GM10248 (cell line): ENCODE measurements at regions of chr20 and their contacts with region 1.

Region 1: GRCh38 chr20:44800398-44801046 is 9.8 kb downstream of the RIMS4 start:
- DNase-seq: no peak
- CTCF ChIP-seq: peak; percentile 16

Region 2: GRCh38 chr20:44866703-44867335 is 66.3 kb after region 1 on chr20:
- CTCF ChIA-PET with region 1: interaction called, 10 read pairs
- POLR2A ChIA-PET with region 1: no interaction called
- DNase-seq: no peak
- CTCF ChIP-seq: no peak

Region 3: DNA sequence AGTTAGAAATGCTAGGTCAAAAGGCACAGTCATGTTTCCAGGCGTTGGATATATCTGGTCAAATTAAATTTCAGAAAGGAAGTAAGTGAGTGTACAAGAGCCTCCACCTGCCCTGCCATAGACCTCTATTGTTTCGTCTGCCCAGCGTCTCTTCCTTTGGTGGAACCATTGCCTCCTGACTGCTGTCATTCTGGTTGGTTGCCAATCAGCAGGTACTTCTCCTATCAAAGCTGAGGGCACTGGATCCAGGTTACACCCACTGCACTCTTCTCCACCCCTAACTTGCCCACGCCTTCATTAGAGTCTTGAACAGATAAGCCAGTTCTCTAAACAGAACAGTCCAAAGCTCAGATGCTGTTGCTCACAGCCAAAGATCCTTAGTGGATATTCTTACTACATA is 317.1 kb after region 1 on chr20:
- CTCF ChIA-PET with region 1: no interaction called
- POLR2A ChIA-PET with region 1: no interaction called
- DNase-seq: no peak
- CTCF ChIP-seq: no peak